Spleen (tissue), 13 donors: ENCODE measurements at regions of chr3 and their contacts with region 1.

Region 1: DNA sequence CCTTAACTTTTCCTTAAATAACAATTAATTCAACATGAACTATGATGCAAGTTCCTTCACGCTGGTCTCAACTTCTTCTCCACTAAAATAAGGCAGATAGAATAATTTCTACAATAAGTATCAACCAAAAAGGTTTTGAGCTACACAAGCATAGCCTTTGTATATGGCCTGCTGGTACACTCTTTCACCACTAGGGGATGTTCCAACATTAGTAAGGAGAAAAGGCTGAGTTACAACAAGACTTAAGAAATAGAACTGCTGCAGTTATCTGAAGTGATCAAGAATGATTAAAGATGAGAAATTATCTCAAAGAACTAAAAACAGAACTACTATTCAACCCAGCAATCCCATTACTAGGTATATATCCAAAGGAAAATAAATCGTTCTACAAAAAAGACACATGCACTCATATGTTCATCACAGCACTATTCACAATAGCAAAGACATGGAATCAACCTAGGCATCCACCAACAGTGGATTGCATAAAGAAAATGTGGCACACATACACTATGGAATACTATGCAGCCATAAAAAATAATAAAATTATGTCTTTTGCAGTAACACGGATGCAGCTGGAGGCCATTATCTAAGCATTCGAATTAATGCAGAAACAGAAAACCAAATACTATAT is 14.4 kb downstream of the ATP13A3 start:
- DNase-seq: no peak
- H3K4me3 ChIP-seq: no peak overlapping the region
- H3K27ac ChIP-seq: no peak overlapping the region
- H3K4me1 ChIP-seq: peaks cover 7 to 80% (median 26%) of the 10 kb centered on the region in 6 donors
- H3K27me3 ChIP-seq: no peaks in the 10 kb centered on the region
- CTCF ChIP-seq: peak; percentile 79 to 95 (median 90)
- POLR2A ChIP-seq: no peak

Region 2: DNA sequence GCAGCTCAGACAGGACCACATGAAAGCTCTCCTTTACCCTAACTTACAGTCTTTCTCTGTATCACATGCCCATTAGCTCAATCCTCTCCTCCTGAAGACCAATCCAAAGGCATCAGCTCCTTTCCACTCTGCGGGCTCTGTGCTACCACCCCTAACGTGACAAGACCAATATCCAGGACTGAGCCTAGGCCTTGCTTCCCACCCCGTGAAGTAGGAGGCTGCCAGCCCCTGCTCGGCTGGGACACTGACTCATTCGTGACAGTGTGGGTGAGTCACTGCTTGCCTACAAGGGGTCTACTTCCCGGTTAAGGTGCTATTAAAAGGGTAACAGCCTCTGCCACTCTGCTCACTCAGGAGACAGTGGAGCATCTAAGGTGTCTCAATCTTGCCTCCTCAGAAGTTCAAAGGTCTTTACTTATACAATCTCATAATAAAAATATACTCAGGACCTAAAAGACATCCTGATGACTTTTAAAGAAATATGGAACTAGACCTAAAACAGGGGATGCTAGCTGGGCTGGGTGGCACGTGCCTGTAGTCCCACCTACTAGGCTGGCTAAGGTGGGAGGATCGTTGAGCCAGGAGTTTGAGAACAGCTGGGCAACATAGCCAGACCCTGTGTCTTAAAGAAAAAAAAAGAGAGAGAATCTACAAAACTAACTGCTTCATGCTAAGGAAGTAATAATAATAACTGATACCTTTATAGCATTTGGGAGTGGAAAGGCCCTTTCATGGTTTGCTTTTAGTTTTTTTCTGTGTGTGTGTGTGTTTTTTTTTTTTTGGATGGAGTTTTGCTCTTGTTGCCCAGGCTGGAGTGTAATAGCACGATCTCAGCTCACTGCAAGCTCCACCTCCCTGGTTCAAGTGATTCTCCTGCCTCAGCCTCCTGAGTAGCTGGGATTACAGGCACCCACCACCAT is 105.8 kb after region 1 on chr3:
- intact Hi-C with region 1: loop called (anchors 5 kb)
- DNase-seq: no peak
- H3K4me3 ChIP-seq: no peak overlapping the region
- H3K27ac ChIP-seq: no peak overlapping the region
- H3K4me1 ChIP-seq: peaks cover 0 to 31% (median 8%) of the 10 kb centered on the region in 6 donors
- H3K27me3 ChIP-seq: peaks cover 0 to 9% (median 0%) of the 10 kb centered on the region in 7 donors
- CTCF ChIP-seq: no peak
- POLR2A ChIP-seq: no peak

Region 3: GRCh38 chr3:194598771-194599557 is 126.6 kb after region 1 on chr3:
- intact Hi-C with region 1: loop called (anchors 5 kb)
- DNase-seq: no peak
- H3K4me3 ChIP-seq: no peak overlapping the region
- H3K27ac ChIP-seq: no peak overlapping the region
- H3K4me1 ChIP-seq: peaks cover 0 to 10% (median 5%) of the 10 kb centered on the region in 6 donors
- H3K27me3 ChIP-seq: no peaks in the 10 kb centered on the region
- CTCF ChIP-seq: no peak
- POLR2A ChIP-seq: no peak

Region 4: GRCh38 chr3:194801461-194802432 is 329.3 kb after region 1 on chr3:
- intact Hi-C with region 1: no loop called
- DNase-seq: peak; percentile 64
- H3K4me3 ChIP-seq: no peak overlapping the region
- H3K27ac ChIP-seq: no peak overlapping the region
- H3K4me1 ChIP-seq: no peaks in the 10 kb centered on the region
- H3K27me3 ChIP-seq: no peaks in the 10 kb centered on the region
- CTCF ChIP-seq: no peak
- POLR2A ChIP-seq: no peak